CD4-positive, alpha-beta memory T cell (primary cell): ENCODE measurements at regions of chr19 and their contacts with region 1.

Region 1: GRCh38 chr19:40348125-40348913 is at the starts of genes C19orf47 and PLD3:
- DNase-seq: peak; percentile 97 to 99 (median 99)
- H3K4me3 ChIP-seq: peak within 1 kb of the TSS; percentile 48 to 73
- H3K4me3 Mint-ChIP-seq: peak within 1 kb of the TSS; percentile 85 to 99 (median 94)
- H3K27ac ChIP-seq: peak within 1 kb of the TSS; percentile 84
- H3K27ac Mint-ChIP-seq: peak within 1 kb of the TSS; percentile 86 to 99 (median 95)
- H3K4me1 ChIP-seq: peaks cover 19% of the 10 kb centered on the region
- H3K4me1 Mint-ChIP-seq: peaks cover 27 to 44% (median 33%) of the 10 kb centered on the region in 4 donors
- H3K27me3 ChIP-seq: no peaks in the 10 kb centered on the region
- H3K27me3 Mint-ChIP-seq: no peaks in the 10 kb centered on the region
- total RNA-seq, gene C19orf47: 13.7 to 17.7 TPM
- total RNA-seq, gene PLD3: 116 to 117 TPM

Region 2: DNA sequence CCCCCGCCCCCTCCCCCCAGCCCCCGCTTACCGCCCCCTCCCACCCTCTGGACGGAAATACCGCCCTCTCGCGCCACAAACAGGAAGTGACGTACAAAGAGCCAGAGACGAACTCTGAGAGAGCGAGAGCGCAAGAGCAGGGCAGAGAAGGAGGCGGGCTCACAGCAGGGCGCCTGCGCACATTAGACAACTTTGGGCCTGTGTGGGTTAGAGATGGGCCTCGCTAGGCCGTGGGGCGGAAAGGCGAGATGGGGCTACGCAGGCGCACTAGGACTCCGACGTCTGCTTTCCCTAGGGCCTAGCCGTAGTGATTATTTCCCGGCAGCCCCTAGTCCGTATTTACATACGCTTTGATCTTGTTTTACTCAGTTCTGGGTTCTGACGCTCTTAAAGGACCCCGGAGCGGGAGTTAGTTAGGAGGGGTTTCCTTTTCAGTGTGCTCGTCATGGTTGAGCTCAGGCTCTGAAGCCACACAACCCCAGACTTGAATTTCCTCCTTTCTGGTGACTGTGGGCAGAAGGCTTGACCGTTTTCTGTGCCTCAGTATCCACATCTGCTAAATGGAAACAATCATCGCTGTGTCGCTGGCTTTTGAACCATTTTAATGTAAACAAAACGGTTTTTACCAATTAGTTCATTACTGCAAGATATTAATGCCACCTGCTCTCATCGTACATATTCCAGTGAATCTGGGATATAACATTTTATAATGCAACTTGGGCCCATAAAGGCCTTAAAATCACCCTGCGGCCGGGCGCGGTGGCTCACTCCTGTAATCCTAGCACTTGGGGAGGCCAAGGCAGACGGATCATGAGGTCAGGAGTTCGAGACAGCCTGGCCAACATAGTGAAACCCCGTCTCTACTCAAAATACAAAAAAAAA is 62.7 kb before region 1 on chr19:
- CTCF ChIA-PET with region 1: no interaction called
- POLR2A ChIA-PET with region 1: interaction called, 13 read pairs
- intact Hi-C with region 1: loop called (anchors 1 kb)
- DNase-seq: peak; percentile 97 to 100 (median 100)
- H3K4me3 ChIP-seq: peak overlapping the region; percentile 45 to 58
- H3K4me3 Mint-ChIP-seq: peak overlapping the region; percentile 84 to 98 (median 92)
- H3K27ac ChIP-seq: peak overlapping the region; percentile 88
- H3K27ac Mint-ChIP-seq: peak overlapping the region; percentile 93 to 99 (median 98)
- H3K4me1 ChIP-seq: peaks cover 49% of the 10 kb centered on the region
- H3K4me1 Mint-ChIP-seq: peaks cover 26 to 56% (median 40%) of the 10 kb centered on the region in 4 donors
- H3K27me3 ChIP-seq: no peaks in the 10 kb centered on the region
- H3K27me3 Mint-ChIP-seq: no peaks in the 10 kb centered on the region

Region 3: GRCh38 chr19:40403262-40403984 is 55.1 kb after region 1 on chr19:
- CTCF ChIA-PET with region 1: no interaction called
- POLR2A ChIA-PET with region 1: interaction called, 17 read pairs
- intact Hi-C with region 1: loop called (anchors 1 kb)
- DNase-seq: peak; percentile 61 to 80 (median 64)
- H3K4me3 ChIP-seq: peak overlapping the region; percentile 59 to 69
- H3K4me3 Mint-ChIP-seq: peak overlapping the region; percentile 86 to 99 (median 96)
- H3K27ac ChIP-seq: peak overlapping the region; percentile 43
- H3K27ac Mint-ChIP-seq: peak overlapping the region; percentile 46 to 95 (median 90)
- H3K4me1 ChIP-seq: peaks cover 18% of the 10 kb centered on the region
- H3K4me1 Mint-ChIP-seq: peaks cover 22 to 38% (median 29%) of the 10 kb centered on the region in 4 donors
- H3K27me3 ChIP-seq: no peaks in the 10 kb centered on the region
- H3K27me3 Mint-ChIP-seq: no peaks in the 10 kb centered on the region